ENCODE measurements at regions of chr4 and their contacts with region 1.

Region 1: DNA sequence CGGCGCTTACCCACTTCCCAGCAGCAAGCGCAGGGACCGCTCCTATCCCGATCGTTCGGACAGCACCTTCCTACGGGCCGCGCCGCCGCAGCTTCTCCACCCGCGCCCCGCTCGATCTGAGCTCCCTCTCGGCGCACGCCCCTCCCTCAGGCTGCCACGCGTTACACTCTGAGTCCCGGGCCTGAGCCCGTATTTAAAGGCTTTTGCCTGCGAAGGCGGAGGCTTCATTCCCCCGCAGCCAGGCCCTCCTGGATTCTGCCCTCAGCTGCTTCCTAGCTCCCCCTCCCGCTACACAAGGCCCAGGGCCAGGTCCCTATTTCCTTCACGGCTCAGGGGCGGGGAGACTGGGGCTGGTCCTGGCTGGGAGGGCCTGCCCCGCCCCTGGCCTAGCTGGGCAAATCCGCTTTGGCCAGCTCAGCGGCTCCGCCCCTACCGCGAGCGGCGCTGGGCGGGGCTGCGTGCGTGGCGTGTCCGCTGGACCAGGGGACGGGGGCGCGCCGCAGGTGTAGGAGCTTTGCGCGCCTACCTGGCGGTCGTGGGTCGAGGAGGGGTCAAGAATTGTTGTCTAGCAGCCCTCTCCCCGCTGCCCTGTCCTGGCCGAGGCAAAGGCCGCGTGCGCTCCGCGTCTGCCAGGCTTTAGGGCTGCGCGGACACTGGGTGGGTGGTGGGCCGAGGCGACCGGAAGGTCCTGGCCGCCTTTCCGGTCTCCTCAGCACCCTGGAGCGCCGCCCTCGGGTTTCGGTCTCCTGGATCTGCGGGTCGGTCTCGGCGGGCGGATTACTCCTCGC is at the start of gene UGDH:
- DNase-seq: peak; percentile 98
- ATAC-seq: peak; percentile 99
- H3K4me3 ChIP-seq: peak within 1 kb of the TSS; percentile 56 to 92
- H3K27ac ChIP-seq: peak within 1 kb of the TSS; percentile 87 to 91
- H3K4me1 ChIP-seq: no peaks in the 10 kb centered on the region
- H3K27me3 ChIP-seq: no peaks in the 10 kb centered on the region
- total RNA-seq, gene UGDH: 83.3 to 116 TPM

Region 2: GRCh38 chr4:39469429-39470077 is 57.9 kb before region 1 on chr4:
- intact Hi-C with region 1: loop called in 1 of 2 experiments (anchors 5 kb)
- DNase-seq: no peak
- ATAC-seq: peak; percentile 93
- H3K4me3 ChIP-seq: no peak overlapping the region
- H3K27ac ChIP-seq: peak overlapping the region in 1 of 2 donors; percentile 64
- H3K4me1 ChIP-seq: no peaks in the 10 kb centered on the region
- H3K27me3 ChIP-seq: no peaks in the 10 kb centered on the region

Region 3: GRCh38 chr4:39621582-39621981 is 94.1 kb after region 1 on chr4:
- intact Hi-C with region 1: loop called in 1 of 2 experiments (anchors 5 kb)
- DNase-seq: peak in 1 of 2 donors; percentile 77
- ATAC-seq: peak; percentile 85
- H3K4me3 ChIP-seq: no peak overlapping the region
- H3K27ac ChIP-seq: peak overlapping the region in 1 of 2 donors; percentile 10
- H3K4me1 ChIP-seq: no peaks in the 10 kb centered on the region
- H3K27me3 ChIP-seq: no peaks in the 10 kb centered on the region

Region 4: DNA sequence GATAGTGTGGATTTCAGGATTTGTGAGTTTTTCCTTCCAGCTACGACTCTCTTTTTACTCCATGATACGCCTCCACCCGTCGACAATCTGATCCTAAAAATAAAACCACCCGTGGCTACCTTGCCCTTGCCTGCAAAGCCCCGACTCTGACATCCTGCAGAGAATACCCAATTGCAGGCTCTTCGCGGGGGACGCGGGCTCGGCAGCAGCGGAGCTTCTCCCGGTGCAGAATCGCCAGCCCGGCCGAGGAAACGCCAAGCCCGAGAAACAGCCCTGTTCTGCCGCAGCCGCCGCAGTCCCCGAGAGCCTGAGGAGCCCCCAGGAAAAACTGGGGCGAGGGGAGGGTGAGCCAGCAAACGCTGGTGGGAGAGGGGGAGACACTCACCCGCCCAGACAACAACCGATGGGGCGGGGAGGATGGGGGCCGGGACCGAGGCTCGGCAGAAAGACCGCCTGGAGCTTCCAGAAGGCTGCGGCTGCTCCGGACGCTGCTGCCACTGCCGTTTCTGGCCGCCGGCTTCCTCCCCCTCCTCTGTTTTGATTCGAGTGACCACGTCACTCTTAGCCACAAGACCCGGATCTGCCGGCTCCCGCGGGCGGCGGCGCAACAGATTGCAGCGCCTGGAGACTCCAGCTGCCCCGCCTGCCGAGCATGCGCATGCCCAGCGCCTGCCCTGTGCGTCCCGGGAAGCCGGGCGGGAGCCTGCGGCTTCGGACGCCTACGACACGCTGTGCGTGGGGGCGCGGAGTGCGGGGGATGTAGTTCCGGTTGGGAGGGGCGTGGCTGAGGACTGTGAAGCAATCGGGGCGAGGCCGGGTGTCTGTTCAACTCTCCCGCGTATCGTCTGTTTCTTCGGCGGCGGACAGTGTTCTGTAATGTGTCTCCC is 111.1 kb after region 1 on chr4 and contains the start of gene SMIM14:
- intact Hi-C with region 1: loop called (anchors 1 to 2 kb)
- DNase-seq: peak; percentile 99
- ATAC-seq: peak; percentile 99
- H3K4me3 ChIP-seq: peak within 1 kb of the TSS; percentile 82 to 92
- H3K27ac ChIP-seq: peak within 1 kb of the TSS; percentile 10 to 97
- H3K4me1 ChIP-seq: no peaks in the 10 kb centered on the region
- H3K27me3 ChIP-seq: no peaks in the 10 kb centered on the region
- total RNA-seq, gene SMIM14: 68.5 to 72.1 TPM

Measured in aorta (tissue), 5 donors.